K562 (cell line): ENCODE measurements at regions of chr3 and their contacts with region 1.

Region 1: DNA sequence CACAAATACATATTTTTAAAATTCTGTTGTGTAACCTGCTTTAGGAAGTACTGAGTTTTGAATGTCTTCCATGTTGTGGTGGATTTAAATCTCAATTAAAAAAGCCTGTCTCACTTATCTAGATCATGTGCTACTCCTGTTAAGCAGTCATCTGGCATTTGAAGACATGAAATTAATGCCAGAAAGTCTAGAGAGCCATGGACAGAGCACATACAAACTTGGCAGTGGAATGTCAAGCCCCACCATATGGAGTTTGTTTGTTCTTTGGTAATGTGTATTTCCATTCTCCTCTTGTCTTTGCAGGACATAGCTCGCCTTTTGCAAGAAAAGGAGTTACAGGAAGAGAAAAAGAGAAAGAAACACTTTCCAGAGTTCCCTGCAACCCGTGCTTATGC is 39.3 kb upstream of the UTS2B start:
- DNase-seq: no peak
- ATAC-seq: no peak
- H3K4me3 ChIP-seq: no peak overlapping the region
- H3K27ac ChIP-seq: no peak overlapping the region
- H3K4me1 ChIP-seq: peaks cover 0 to 4% of the 10 kb centered on the region in 2 experiments; a peak in 2 of 5 replicates
- H3K27me3 ChIP-seq: no peaks in the 10 kb centered on the region
- CTCF ChIP-seq: no peak
- EP300 ChIP-seq: no peak
- POLR2A ChIP-seq: no peak
- RAD21 ChIP-seq: no peak

Region 2: DNA sequence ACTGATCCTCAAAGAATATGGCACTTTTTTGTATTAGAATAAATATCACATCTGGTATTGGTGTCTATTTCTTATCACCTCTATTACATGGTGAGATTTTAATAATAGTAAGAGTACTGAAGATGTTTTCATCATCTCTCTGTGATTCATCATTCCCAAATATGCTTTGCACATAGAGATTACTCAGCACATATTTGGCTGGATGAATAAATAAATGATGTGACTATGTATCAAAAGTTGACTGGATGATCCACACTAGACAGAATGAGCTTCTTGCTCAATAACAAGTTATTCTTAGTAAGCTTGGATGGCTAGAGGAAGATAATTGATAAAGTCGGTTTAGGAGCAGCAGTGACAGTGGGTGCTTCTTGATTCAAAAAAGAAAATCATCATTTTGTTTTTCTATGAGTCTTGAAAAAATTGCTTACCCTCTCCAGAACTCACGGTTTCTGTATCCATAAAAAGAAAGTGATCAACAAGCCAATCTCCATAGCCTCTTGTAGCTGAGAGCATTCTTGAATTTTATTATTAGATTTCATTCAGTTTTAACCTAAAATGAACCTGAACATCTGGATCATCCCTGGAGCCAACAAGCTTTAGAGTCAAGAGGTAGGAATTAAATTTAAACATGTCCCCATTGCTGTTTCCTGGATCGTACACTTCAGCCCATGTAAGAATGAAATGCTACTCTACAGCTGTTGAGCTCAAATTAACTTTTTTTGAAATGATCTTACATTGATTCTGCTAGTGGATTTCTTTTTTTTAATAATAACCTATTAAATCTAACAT is 275.4 kb before region 1 on chr3:
- CTCF ChIA-PET with region 1: no interaction called
- POLR2A ChIA-PET with region 1: no interaction called
- in situ Hi-C with region 1: no loop called
- intact Hi-C with region 1: no loop called
- DNase-seq: no peak
- ATAC-seq: no peak
- H3K4me3 ChIP-seq: no peak overlapping the region
- H3K27ac ChIP-seq: no peak overlapping the region
- H3K4me1 ChIP-seq: no peaks in the 10 kb centered on the region
- H3K27me3 ChIP-seq: no peaks in the 10 kb centered on the region
- CTCF ChIP-seq: no peak
- EP300 ChIP-seq: no peak
- POLR2A ChIP-seq: no peak
- RAD21 ChIP-seq: no peak

Region 3: GRCh38 chr3:191329654-191330528 is 39.7 kb before region 1 on chr3 and contains the start of gene UTS2B:
- CTCF ChIA-PET with region 1: no interaction called
- POLR2A ChIA-PET with region 1: no interaction called
- in situ Hi-C with region 1: no loop called
- intact Hi-C with region 1: loop called (anchors 5 kb)
- DNase-seq: peak; percentile 20 to 47 (median 38)
- ATAC-seq: peak; percentile 45
- H3K4me3 ChIP-seq: peak within 1 kb of the TSS; percentile 78
- H3K27ac ChIP-seq: peak within 1 kb of the TSS; percentile 79
- H3K4me1 ChIP-seq: peaks cover 11 to 27% of the 10 kb centered on the region in 2 experiments; a peak in 4 of 5 replicates
- H3K27me3 ChIP-seq: no peaks in the 10 kb centered on the region
- CTCF ChIP-seq: no peak
- EP300 ChIP-seq: no peak
- POLR2A ChIP-seq: no peak
- RAD21 ChIP-seq: no peak
- polyA plus RNA-seq, gene UTS2B: not detected

Region 4: GRCh38 chr3:191593486-191593885 is 223.9 kb after region 1 on chr3:
- CTCF ChIA-PET with region 1: no interaction called
- POLR2A ChIA-PET with region 1: no interaction called
- in situ Hi-C with region 1: no loop called
- intact Hi-C with region 1: no loop called
- DNase-seq: no peak
- ATAC-seq: no peak
- H3K4me3 ChIP-seq: no peak overlapping the region
- H3K27ac ChIP-seq: no peak overlapping the region
- H3K4me1 ChIP-seq: no peaks in the 10 kb centered on the region
- H3K27me3 ChIP-seq: no peaks in the 10 kb centered on the region
- CTCF ChIP-seq: no peak
- EP300 ChIP-seq: no peak
- POLR2A ChIP-seq: no peak
- RAD21 ChIP-seq: no peak